ENCODE measurements at regions of chr11 and their contacts with region 1.

Region 1: GRCh38 chr11:126446581-126446980 is 91.1 kb downstream of the ST3GAL4 start:
- DNase-seq: no peak
- ATAC-seq: no peak
- H3K4me3 ChIP-seq: no peak overlapping the region
- H3K4me3 Mint-ChIP-seq: no peak overlapping the region
- H3K27ac ChIP-seq: no peak overlapping the region
- H3K27ac Mint-ChIP-seq: no peak overlapping the region
- H3K4me1 ChIP-seq: no peaks in the 10 kb centered on the region
- H3K4me1 Mint-ChIP-seq: no peaks in the 10 kb centered on the region
- H3K27me3 ChIP-seq: peaks cover 0 to 1% (median 0%) of the 10 kb centered on the region in 4 experiments
- H3K27me3 Mint-ChIP-seq: peaks cover 5% of the 10 kb centered on the region
- CTCF ChIP-seq: no peak

Region 2: DNA sequence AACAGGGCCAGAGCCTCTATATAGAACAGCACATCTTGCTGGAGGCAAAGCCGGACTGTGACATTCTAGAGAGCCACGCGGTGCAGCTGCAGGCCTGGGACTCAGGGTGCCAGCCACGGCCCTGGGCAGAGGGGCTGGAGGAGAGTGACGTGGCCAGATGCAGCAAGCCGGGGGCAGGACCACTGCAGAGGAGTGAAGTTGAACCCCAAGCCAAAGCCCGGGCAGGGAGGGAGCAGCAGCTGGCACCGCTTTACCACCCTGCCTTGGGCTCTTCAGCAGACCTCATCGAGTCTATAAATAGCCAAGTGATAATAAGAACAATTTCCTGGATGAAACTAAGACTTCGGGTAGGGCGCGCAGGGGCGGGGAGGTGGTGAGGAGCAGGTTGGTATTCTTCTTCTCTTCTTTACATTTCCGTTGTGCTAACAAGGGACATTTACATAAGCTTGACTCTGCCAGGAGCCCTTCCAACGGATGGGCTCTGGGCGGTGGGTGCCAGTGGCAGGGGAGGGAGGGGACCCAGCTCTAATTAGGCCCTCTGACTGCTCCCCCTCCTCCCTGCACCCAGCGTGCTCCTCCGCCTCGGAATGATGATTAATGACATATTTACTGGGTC is 19.1 kb after region 1 on chr11:
- CTCF ChIA-PET with region 1: no interaction called
- POLR2A ChIA-PET with region 1: interaction called, 11 read pairs
- intact Hi-C with region 1: no loop called
- DNase-seq: peak; percentile 60
- ATAC-seq: peak; percentile 63
- H3K4me3 ChIP-seq: peak overlapping the region in 4 of 5 experiments; percentile 4 to 23 (median 14)
- H3K4me3 Mint-ChIP-seq: peak overlapping the region; percentile 75
- H3K27ac ChIP-seq: peak overlapping the region; percentile 34 to 56
- H3K27ac Mint-ChIP-seq: peak overlapping the region; percentile 67
- H3K4me1 ChIP-seq: peaks cover 46 to 52% of the 10 kb centered on the region in 2 donors
- H3K4me1 Mint-ChIP-seq: peaks cover 33% of the 10 kb centered on the region
- H3K27me3 ChIP-seq: peaks cover 0 to 11% (median 0%) of the 10 kb centered on the region in 4 experiments
- H3K27me3 Mint-ChIP-seq: no peaks in the 10 kb centered on the region
- CTCF ChIP-seq: no peak

Measured in B cell (primary cell).